ENCODE measurements at regions of chr6 and their contacts with region 1.

Region 1: GRCh38 chr6:34595332-34596184 is 39.4 kb upstream of the SPDEF start:
- DNase-seq: no peak
- H3K4me3 ChIP-seq: no peak overlapping the region
- H3K27ac ChIP-seq: no peak overlapping the region
- H3K4me1 ChIP-seq: peaks cover 0 to 3% (median 0%) of the 10 kb centered on the region in 4 experiments
- H3K27me3 ChIP-seq: no peaks in the 10 kb centered on the region

Region 2: GRCh38 chr6:34583461-34583860 is 12.1 kb before region 1 on chr6:
- CTCF ChIA-PET with region 1: interaction called, 12 read pairs
- POLR2A ChIA-PET with region 1: no interaction called
- DNase-seq: peak in 1 of 3 donors; percentile 13
- H3K4me3 ChIP-seq: no peak overlapping the region
- H3K27ac ChIP-seq: no peak overlapping the region
- H3K4me1 ChIP-seq: no peaks in the 10 kb centered on the region
- H3K27me3 ChIP-seq: no peaks in the 10 kb centered on the region

Region 3: GRCh38 chr6:34760108-34760507 is 164.6 kb after region 1 on chr6:
- CTCF ChIA-PET with region 1: no interaction called
- POLR2A ChIA-PET with region 1: no interaction called
- DNase-seq: no peak
- H3K4me3 ChIP-seq: no peak overlapping the region
- H3K27ac ChIP-seq: no peak overlapping the region
- H3K4me1 ChIP-seq: peaks cover 6 to 13% (median 7%) of the 10 kb centered on the region in 4 experiments
- H3K27me3 ChIP-seq: no peaks in the 10 kb centered on the region

Measured in common myeloid progenitor, CD34-positive (primary cell).